Activated CD8-positive, alpha-beta T cell treated with anti-CD3 and anti-CD28 coated beads, Interleukin-2, amount 10 ng/mL, durations not matched to agents 7 days and 5 days (primary cell): ENCODE measurements at regions of chr10 and their contacts with region 1.

Region 1: GRCh38 chr10:132023092-132023811 is 41.5 kb upstream of the BNIP3 start:
- DNase-seq: peak; percentile 83
- ATAC-seq: peak; percentile 89
- H3K4me3 Mint-ChIP-seq: no peak overlapping the region
- H3K27ac Mint-ChIP-seq: no peak overlapping the region
- H3K4me1 Mint-ChIP-seq: peaks cover 6% of the 10 kb centered on the region
- H3K27me3 Mint-ChIP-seq: peaks cover 14% of the 10 kb centered on the region

Region 2: DNA sequence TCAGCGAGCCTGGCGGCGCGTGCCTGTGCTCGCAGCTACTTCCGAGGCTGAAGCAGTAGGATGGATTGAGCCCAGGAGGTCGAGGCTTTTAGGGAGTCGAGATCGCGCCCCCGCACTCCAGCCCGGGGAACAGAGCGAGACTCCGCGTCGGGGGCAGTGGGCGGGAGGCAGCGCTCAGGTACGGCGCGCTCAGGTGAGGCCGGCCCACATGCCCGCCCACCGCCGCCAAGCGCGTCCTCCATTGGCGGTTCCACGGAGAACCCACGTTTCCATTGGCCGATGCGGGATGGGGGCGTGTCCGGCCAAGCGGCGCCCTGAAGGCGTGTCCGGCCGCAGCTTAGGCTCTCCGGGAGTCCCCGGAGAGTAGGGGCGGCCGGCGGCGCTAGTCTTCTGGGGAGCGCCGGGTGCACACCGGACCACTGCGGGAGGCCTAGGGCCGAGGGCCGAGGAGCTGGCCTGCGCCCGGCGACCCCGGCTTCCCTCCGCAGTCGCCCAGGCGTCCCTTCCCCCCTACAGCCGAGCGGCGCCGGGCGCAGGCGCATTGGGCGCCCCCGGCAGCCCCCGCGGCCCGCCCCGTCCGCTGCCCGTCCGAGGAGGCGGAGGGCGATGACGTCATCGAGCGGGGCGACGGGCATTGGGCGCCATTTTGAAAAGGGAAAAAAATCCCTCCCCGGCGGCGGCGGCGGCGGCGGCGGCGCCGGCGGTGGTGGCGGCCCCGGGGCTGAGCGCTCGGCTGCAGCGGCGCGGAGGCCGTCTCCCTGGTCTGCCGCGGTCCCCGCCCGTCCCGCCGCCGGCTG is 122.7 kb before region 1 on chr10 and contains the start of gene PPP2R2D:
- CTCF ChIA-PET with region 1: interaction called, 14 read pairs
- POLR2A ChIA-PET with region 1: no interaction called
- DNase-seq: peak; percentile 95
- ATAC-seq: peak; percentile 89
- H3K4me3 Mint-ChIP-seq: peak within 1 kb of the TSS; percentile 90
- H3K27ac Mint-ChIP-seq: peak within 1 kb of the TSS; percentile 86
- H3K4me1 Mint-ChIP-seq: peaks cover 68% of the 10 kb centered on the region
- H3K27me3 Mint-ChIP-seq: peaks cover 12% of the 10 kb centered on the region
- total RNA-seq, gene PPP2R2D: 36.5 to 37.5 TPM

Region 3: GRCh38 chr10:131972474-131973071 is 50.7 kb before region 1 on chr10:
- CTCF ChIA-PET with region 1: interaction called, 29 read pairs
- POLR2A ChIA-PET with region 1: no interaction called
- DNase-seq: peak; percentile 63
- ATAC-seq: peak; percentile 74
- H3K4me3 Mint-ChIP-seq: peak overlapping the region; percentile 65
- H3K27ac Mint-ChIP-seq: peak overlapping the region; percentile 90
- H3K4me1 Mint-ChIP-seq: peaks cover 65% of the 10 kb centered on the region
- H3K27me3 Mint-ChIP-seq: no peaks in the 10 kb centered on the region